Psoas muscle (tissue), 8 donors: ENCODE measurements at regions of chr11 and their contacts with region 1.

Region 1: GRCh38 chr11:66891851-66892660 is 35.2 kb downstream of the LRFN4 start:
- DNase-seq: peak; percentile 61 to 80
- ATAC-seq: peak; percentile 97 to 98 (median 98)
- H3K4me3 ChIP-seq: peak overlapping the region; percentile 7
- H3K27ac ChIP-seq: peak overlapping the region; percentile 72
- H3K4me1 ChIP-seq: peaks cover 21% of the 10 kb centered on the region
- H3K27me3 ChIP-seq: no peaks in the 10 kb centered on the region
- CTCF ChIP-seq: no peak

Region 2: GRCh38 chr11:66936311-66936711 is 44.3 kb after region 1 on chr11:
- intact Hi-C with region 1: no loop called
- DNase-seq: no peak
- ATAC-seq: no peak
- H3K4me3 ChIP-seq: no peak overlapping the region
- H3K27ac ChIP-seq: no peak overlapping the region
- H3K4me1 ChIP-seq: no peaks in the 10 kb centered on the region
- H3K27me3 ChIP-seq: no peaks in the 10 kb centered on the region
- CTCF ChIP-seq: no peak

Region 3: DNA sequence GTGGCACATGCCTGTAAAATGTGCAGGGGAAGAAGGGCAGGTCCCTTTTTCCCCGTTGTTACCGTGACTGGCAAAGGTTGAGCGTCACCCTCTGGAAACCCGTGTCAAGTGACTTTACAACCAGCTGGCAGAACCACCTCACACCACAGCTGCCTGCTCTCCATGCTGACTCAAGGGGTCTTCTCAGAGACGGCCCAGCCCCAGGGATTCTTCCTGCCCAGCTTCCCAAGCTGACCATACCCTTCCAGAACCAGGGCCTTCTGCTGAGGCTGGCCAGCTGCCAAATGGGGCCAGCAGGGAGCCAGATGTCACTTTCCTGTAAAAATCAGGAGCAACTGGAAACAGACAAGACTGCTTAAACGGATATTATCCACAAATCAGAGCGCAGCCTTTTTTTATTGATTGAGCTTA is 59.9 kb after region 1 on chr11:
- intact Hi-C with region 1: loop called (anchors 2 to 5 kb)
- DNase-seq: no peak
- ATAC-seq: peak; percentile 48 to 64 (median 58)
- H3K4me3 ChIP-seq: no peak overlapping the region
- H3K27ac ChIP-seq: peak overlapping the region; percentile 47
- H3K4me1 ChIP-seq: peaks cover 10% of the 10 kb centered on the region
- H3K27me3 ChIP-seq: no peaks in the 10 kb centered on the region
- CTCF ChIP-seq: no peak

Region 4: GRCh38 chr11:66958232-66958955 is 66.3 kb after region 1 on chr11 and contains the start of gene PC:
- intact Hi-C with region 1: loop called (anchors 2 to 5 kb)
- DNase-seq: peak; percentile 100
- ATAC-seq: peak; percentile 97 to 99 (median 98)
- H3K4me3 ChIP-seq: peak within 1 kb of the TSS; percentile 67
- H3K27ac ChIP-seq: peak within 1 kb of the TSS; percentile 85
- H3K4me1 ChIP-seq: peaks cover 8% of the 10 kb centered on the region
- H3K27me3 ChIP-seq: no peaks in the 10 kb centered on the region
- CTCF ChIP-seq: no peak
- total RNA-seq, gene PC: 16.7 to 33.0 (median 25.3) TPM

Region 5: DNA sequence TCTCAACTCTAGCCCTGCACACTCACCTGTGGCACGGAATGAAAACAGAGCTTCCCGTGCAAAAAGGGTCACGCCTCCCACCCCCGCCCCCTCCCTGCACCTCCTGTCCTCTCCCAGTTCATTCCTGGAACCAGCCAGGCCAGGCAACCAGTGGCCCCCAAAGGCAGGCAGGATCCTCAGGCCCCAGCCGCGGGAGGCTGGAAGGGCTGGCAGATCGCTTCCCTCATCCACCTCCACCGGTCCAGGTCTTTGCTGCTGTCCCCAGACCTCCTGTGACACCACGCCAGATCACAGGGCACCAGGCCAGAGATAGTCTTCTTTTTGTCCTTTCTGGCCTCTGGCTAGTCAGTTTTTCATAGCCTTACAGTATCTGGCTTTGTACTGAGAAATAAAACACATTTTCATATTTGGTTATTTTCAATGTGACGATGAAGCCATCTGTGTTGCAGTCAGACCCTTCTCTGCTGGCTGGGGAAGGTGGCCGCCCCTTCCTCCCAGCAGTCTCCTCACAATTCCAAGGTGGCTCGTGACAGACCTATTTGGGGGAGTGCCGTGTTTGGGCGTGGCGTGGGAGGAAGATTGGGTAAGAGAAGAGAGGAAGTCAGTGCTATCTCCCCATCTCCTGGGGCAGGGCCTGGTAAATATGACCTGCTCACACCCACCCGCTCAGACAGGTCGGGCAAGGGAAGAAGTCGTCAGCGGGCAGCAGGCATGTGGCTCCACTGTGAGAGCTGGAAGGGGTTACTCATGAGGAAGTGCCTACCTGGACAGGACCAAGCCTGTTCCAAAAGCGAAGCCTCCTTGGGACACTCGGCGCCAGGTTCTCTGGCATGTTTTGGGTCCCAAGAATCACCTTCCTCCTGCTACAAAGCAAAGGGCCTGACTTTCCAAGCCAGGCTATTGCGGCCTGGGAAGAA is 420.4 kb after region 1 on chr11:
- intact Hi-C with region 1: no loop called
- DNase-seq: no peak
- ATAC-seq: no peak
- H3K4me3 ChIP-seq: no peak overlapping the region
- H3K27ac ChIP-seq: no peak overlapping the region
- H3K4me1 ChIP-seq: no peaks in the 10 kb centered on the region
- H3K27me3 ChIP-seq: no peaks in the 10 kb centered on the region
- CTCF ChIP-seq: no peak